ENCODE measurements at regions of chr13 and their contacts with region 1.

Region 1: GRCh38 chr13:30569901-30570576 is 47.7 kb upstream of the USPL1 start:
- DNase-seq: peak in 1 of 3 donors; percentile 17
- H3K4me3 ChIP-seq: no peak overlapping the region
- H3K27ac ChIP-seq: no peak overlapping the region
- H3K4me1 ChIP-seq: peaks cover 5 to 19% (median 11%) of the 10 kb centered on the region in 4 experiments
- H3K27me3 ChIP-seq: no peaks in the 10 kb centered on the region

Region 2: DNA sequence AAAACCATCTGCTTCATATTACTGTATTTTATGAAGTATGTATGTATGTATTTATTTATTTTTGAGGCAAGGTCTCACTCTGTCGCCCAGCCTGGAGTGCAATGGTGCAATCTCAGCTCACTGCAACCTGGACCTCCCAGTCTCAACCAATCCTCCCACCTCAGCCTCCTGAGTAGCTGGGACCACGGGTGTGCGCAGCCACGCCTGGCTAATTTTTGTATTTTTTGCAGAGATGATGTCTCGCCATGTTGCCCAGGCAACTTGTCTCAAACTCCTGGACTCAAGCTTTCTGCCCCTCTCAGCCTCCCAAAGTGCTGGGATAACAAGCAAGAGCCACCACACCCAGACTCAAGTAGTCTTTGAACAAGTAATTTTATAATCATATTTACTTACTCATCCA is 268.2 kb before region 1 on chr13:
- CTCF ChIA-PET with region 1: no interaction called
- POLR2A ChIA-PET with region 1: no interaction called
- DNase-seq: no peak
- H3K4me3 ChIP-seq: no peak overlapping the region
- H3K27ac ChIP-seq: no peak overlapping the region
- H3K4me1 ChIP-seq: peaks cover 6 to 38% (median 20%) of the 10 kb centered on the region in 4 experiments
- H3K27me3 ChIP-seq: no peaks in the 10 kb centered on the region

Region 3: GRCh38 chr13:30581582-30581981 is 11.5 kb after region 1 on chr13:
- CTCF ChIA-PET with region 1: interaction called, 11 read pairs
- POLR2A ChIA-PET with region 1: interaction called, 3 read pairs
- DNase-seq: peak; percentile 41 to 53 (median 51)
- H3K4me3 ChIP-seq: no peak overlapping the region
- H3K27ac ChIP-seq: no peak overlapping the region
- H3K4me1 ChIP-seq: peaks cover 5 to 27% (median 19%) of the 10 kb centered on the region in 4 experiments
- H3K27me3 ChIP-seq: no peaks in the 10 kb centered on the region

Region 4: GRCh38 chr13:30600496-30600895 is 30.5 kb after region 1 on chr13:
- CTCF ChIA-PET with region 1: no interaction called
- POLR2A ChIA-PET with region 1: no interaction called
- DNase-seq: no peak
- H3K4me3 ChIP-seq: no peak overlapping the region
- H3K27ac ChIP-seq: no peak overlapping the region
- H3K4me1 ChIP-seq: no peaks in the 10 kb centered on the region
- H3K27me3 ChIP-seq: no peaks in the 10 kb centered on the region

Region 5: GRCh38 chr13:30730526-30730925 is 160.5 kb after region 1 on chr13:
- CTCF ChIA-PET with region 1: no interaction called
- POLR2A ChIA-PET with region 1: no interaction called
- DNase-seq: no peak
- H3K4me3 ChIP-seq: no peak overlapping the region
- H3K27ac ChIP-seq: no peak overlapping the region
- H3K4me1 ChIP-seq: peaks cover 6 to 16% (median 10%) of the 10 kb centered on the region in 4 experiments
- H3K27me3 ChIP-seq: no peaks in the 10 kb centered on the region

Measured in common myeloid progenitor, CD34-positive (primary cell).